ENCODE measurements at regions of chr6 and their contacts with region 1.

Region 1: GRCh38 chr6:73248192-73248903 is 14.6 kb downstream of the KHDC1 start:
- DNase-seq: no peak
- H3K4me3 ChIP-seq: no peak overlapping the region
- H3K27ac ChIP-seq: no peak overlapping the region
- H3K4me1 ChIP-seq: no peaks in the 10 kb centered on the region
- H3K27me3 ChIP-seq: no peaks in the 10 kb centered on the region
- CTCF ChIP-seq: no peak
- EP300 ChIP-seq: no peak
- POLR2A ChIP-seq: no peak

Region 2: DNA sequence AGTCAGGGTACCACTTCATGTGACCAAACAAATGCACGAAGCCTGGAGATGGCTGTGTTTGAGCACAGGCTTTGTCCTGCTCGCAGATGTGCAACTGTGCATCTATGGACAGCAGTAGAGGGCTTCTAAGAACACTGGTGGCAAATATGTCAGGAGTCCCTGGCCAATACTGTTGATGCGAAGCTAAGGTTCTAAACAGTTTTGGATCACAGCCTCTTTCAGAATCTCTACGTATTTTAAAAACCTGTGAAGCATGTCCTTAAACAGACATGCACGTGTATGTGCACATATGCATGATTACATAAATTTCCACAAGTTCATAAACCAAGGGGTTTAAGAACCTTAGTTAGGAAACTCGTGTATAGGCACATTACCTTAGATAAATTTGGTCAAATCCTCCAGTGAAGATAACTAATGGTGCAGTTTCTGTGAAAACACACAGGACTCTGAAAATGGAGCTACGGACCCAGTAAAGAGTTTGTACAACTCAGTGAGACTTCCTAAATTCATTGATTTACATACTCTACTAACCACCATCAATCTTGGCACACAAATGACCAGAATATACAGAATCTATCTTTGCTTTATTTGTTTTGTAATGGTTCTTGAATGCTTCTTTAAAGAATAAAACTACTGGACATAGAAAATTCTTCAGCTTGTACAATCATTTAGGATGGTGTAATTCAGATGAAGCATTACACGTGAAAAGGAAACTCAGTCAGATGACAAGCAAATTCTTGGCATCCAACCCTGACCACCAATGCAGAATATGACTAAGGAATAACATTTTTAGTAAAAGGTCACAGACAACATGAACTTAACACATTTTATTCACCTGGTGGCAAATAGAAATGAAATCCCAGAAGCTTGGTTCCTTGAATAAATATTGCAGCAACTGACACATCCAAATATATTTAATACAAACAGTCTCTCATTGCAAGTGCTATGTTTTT is 599.0 kb before region 1 on chr6:
- in situ Hi-C with region 1: no loop called
- intact Hi-C with region 1: loop called (anchors 2 kb)
- DNase-seq: no peak
- H3K4me3 ChIP-seq: no peak overlapping the region
- H3K27ac ChIP-seq: no peak overlapping the region
- H3K4me1 ChIP-seq: no peaks in the 10 kb centered on the region
- H3K27me3 ChIP-seq: no peaks in the 10 kb centered on the region
- CTCF ChIP-seq: no peak
- EP300 ChIP-seq: no peak
- POLR2A ChIP-seq: no peak

Region 3: GRCh38 chr6:73177221-73177944 is 71.0 kb before region 1 on chr6:
- in situ Hi-C with region 1: no loop called
- intact Hi-C with region 1: no loop called
- DNase-seq: no peak
- H3K4me3 ChIP-seq: no peak overlapping the region
- H3K27ac ChIP-seq: no peak overlapping the region
- H3K4me1 ChIP-seq: peaks cover 0 to 4% (median 0%) of the 10 kb centered on the region in 4 donors
- H3K27me3 ChIP-seq: no peaks in the 10 kb centered on the region
- CTCF ChIP-seq: no peak
- EP300 ChIP-seq: no peak
- POLR2A ChIP-seq: no peak

Region 4: DNA sequence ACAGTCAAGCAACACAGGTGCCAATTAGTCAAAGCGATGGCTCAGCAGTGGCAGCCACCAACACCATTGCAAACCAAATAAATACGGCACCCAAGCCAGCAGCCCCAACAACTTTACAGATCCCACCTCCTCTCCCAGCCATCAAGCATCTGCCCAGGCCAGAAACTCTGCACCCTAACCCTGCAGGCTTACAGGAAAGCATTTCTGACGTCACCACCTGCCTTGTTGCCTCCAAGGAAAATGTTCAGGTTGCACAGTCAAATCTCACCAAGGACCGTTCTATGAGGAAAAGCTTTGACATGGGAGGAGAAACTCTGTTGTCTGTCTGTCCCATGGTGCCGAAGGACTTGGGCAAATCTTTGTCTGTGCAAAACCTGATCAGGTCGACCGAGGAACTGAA is 53.6 kb before region 1 on chr6:
- in situ Hi-C with region 1: no loop called
- intact Hi-C with region 1: no loop called
- DNase-seq: no peak
- H3K4me3 ChIP-seq: no peak overlapping the region
- H3K27ac ChIP-seq: no peak overlapping the region
- H3K4me1 ChIP-seq: no peaks in the 10 kb centered on the region
- H3K27me3 ChIP-seq: no peaks in the 10 kb centered on the region
- CTCF ChIP-seq: no peak
- EP300 ChIP-seq: no peak
- POLR2A ChIP-seq: no peak

Region 5: DNA sequence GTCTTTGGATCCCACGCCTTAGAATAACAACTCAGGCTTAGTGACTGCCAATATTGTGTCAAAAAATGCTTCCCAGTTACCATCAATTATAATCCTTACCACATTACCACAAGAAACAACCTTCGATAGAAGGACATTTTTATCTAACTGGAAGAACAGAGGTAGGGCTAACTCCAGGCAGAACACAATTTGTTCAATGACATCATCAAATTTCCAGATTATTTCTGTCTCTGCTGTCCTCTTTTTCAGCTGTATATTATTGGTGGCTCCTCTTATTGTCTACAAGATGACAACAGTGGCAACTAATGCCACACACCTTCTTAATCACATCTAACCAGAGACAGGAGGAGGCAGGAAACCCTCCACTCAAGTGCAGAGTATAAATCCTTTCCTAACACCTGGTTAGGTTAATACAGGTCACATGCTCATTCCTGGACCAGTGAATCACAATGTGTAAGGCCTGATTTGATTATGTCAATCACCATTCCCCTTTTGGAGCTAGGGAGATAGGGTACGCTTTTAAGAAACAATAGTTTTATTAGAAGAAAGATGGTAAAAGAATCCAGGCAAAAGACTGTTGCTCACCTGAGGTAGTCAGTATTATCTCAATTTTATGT is 41.0 kb before region 1 on chr6:
- in situ Hi-C with region 1: no loop called
- intact Hi-C with region 1: loop called (anchors 1 kb)
- DNase-seq: no peak
- H3K4me3 ChIP-seq: no peak overlapping the region
- H3K27ac ChIP-seq: no peak overlapping the region
- H3K4me1 ChIP-seq: no peaks in the 10 kb centered on the region
- H3K27me3 ChIP-seq: no peaks in the 10 kb centered on the region
- CTCF ChIP-seq: no peak
- EP300 ChIP-seq: no peak
- POLR2A ChIP-seq: no peak

Region 6: DNA sequence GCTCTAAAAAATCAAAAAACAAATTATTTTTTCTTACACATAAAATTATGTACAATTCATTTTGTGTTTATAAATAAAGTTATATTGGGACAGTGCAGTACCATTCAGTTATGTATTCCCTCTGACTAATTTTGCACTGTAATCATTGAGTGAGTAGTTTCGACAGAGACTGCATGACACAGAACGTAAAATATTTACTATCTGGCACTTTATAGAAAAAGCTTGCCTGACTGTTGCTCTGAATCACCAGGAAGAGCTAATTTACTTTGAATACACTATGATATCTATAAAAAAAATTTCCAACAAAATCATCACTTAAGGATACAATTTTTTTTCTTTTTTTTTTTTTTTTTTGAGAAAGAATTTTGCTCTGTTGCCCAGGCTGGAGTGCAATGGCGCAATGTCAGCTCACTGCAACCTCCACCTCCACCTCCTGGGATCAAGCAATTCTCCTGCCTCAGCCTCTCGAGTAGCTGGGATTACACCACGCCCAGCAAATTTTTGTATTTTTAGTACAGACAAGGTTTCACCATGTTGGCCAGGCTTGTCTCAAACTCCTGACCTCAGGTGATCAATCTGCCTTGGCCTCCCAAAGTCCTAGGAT is 12.1 kb before region 1 on chr6:
- in situ Hi-C with region 1: no loop called
- intact Hi-C with region 1: no loop called
- DNase-seq: no peak
- H3K4me3 ChIP-seq: no peak overlapping the region
- H3K27ac ChIP-seq: no peak overlapping the region
- H3K4me1 ChIP-seq: no peaks in the 10 kb centered on the region
- H3K27me3 ChIP-seq: no peaks in the 10 kb centered on the region
- CTCF ChIP-seq: no peak
- EP300 ChIP-seq: no peak
- POLR2A ChIP-seq: no peak